CD4-positive, alpha-beta T cell (primary cell): ENCODE measurements at regions of chr6 and their contacts with region 1.

Region 1: GRCh38 chr6:83067448-83068413 is at the start of gene DOP1A:
- DNase-seq: peak; percentile 93 to 98 (median 96)
- ATAC-seq: peak; percentile 89
- H3K4me3 ChIP-seq: peak within 1 kb of the TSS; percentile 82
- H3K4me3 Mint-ChIP-seq: peak within 1 kb of the TSS; percentile 91
- H3K27ac ChIP-seq: peak within 1 kb of the TSS; percentile 85 to 89
- H3K27ac Mint-ChIP-seq: peak within 1 kb of the TSS; percentile 90
- H3K4me1 ChIP-seq: peaks cover 19% of the 10 kb centered on the region
- H3K4me1 Mint-ChIP-seq: peaks cover 67% of the 10 kb centered on the region
- H3K27me3 ChIP-seq: no peaks in the 10 kb centered on the region
- H3K27me3 Mint-ChIP-seq: no peaks in the 10 kb centered on the region
- CTCF ChIP-seq: peak; percentile 95
- total RNA-seq, gene DOP1A: 15.6 to 15.8 TPM

Region 2: DNA sequence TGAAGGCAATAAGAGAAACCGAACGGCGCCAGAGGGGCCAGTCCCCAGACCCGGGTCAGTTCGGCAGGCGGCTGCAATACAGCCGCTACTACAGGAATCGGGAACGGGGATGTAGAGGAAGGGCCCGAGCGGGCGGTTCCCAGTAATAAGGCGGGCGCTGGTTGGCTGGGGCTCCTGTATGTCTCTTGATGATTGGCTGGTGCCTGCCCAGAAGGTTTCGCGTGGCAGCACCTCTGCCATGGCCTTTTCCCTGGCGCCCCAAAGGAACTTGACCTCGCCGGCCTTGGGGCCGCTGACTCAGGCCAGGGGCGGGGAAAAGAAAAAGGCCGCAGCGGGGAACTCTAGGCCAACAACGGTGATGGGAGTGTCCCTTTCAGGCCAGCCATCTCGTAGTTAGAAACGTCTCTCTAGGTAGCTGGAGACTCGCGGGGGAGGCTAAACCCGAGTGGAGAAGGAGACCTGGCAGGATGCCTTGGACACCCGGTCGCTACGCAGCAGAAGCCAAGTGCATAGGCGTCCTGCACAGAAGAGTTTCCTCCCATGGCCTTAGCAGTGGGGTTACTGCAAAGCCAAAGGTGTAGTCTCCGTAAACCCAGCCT is 820.0 kb before region 1 on chr6 and contains the start of gene IBTK:
- CTCF ChIA-PET with region 1: interaction called, 9 read pairs
- POLR2A ChIA-PET with region 1: interaction called, 6 read pairs
- intact Hi-C with region 1: loop called (anchors 2 to 5 kb)
- DNase-seq: peak; percentile 84 to 97 (median 90)
- ATAC-seq: peak; percentile 87
- H3K4me3 ChIP-seq: peak within 1 kb of the TSS; percentile 67
- H3K4me3 Mint-ChIP-seq: peak within 1 kb of the TSS; percentile 96
- H3K27ac ChIP-seq: peak within 1 kb of the TSS; percentile 59 to 73
- H3K27ac Mint-ChIP-seq: peak within 1 kb of the TSS; percentile 98
- H3K4me1 ChIP-seq: peaks cover 24% of the 10 kb centered on the region
- H3K4me1 Mint-ChIP-seq: peaks cover 51% of the 10 kb centered on the region
- H3K27me3 ChIP-seq: no peaks in the 10 kb centered on the region
- H3K27me3 Mint-ChIP-seq: no peaks in the 10 kb centered on the region
- CTCF ChIP-seq: no peak
- total RNA-seq, gene IBTK: 11.0 to 11.2 TPM

Region 3: DNA sequence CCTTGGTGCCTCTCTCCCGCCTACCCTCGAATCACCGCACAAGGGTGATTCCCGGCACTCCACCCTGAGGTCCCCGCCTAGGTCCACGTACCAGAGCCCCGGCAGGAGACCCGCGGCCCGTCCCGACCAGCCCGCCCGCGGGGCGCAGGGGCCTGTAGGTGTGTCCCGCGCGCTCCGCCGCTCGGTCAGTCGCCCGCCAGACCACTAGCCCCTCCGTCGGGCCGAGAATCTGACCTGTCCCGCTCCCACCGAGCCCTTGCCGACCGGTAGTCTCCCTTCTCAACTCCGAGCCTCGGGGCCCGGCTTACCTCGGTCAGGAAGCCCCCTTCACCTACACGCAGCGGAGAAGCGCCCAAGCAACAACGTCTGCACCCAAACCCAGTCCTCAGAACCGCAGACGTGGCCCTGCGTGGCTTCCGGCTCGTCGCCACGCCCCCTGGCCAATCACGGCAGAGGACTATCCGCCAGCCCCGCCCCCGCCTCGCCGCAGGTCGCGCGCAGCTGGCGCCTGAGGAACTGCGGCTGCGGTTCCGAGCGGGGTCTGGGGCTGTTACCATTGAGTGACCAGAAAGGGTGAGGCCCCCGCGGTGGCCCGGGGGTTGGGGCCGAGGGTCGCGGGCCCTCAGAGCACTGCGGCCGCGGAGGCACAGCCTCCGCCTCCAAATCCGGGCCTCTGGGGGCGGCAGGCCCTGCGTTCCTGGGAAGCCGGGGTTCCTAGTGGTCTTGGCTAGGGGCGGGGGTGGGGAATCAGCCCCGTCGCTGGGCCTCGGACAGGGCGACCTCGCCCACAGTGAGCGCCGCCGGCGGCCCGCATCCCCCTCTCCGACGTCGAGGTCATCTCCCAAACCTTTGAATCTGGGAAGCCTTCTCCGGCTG is 125.4 kb after region 1 on chr6 and contains the starts of genes PGM3 and RWDD2A:
- CTCF ChIA-PET with region 1: interaction called, 10 read pairs
- POLR2A ChIA-PET with region 1: interaction called, 6 read pairs
- intact Hi-C with region 1: loop called (anchors 2 kb)
- DNase-seq: peak; percentile 81 to 96 (median 89)
- ATAC-seq: peak; percentile 97
- H3K4me3 ChIP-seq: peak within 1 kb of the TSS; percentile 88
- H3K4me3 Mint-ChIP-seq: peak within 1 kb of the TSS; percentile 97
- H3K27ac ChIP-seq: peak within 1 kb of the TSS in 1 of 2 donors; percentile 70
- H3K27ac Mint-ChIP-seq: peak within 1 kb of the TSS; percentile 94
- H3K4me1 ChIP-seq: peaks cover 17% of the 10 kb centered on the region
- H3K4me1 Mint-ChIP-seq: peaks cover 54% of the 10 kb centered on the region
- H3K27me3 ChIP-seq: no peaks in the 10 kb centered on the region
- H3K27me3 Mint-ChIP-seq: no peaks in the 10 kb centered on the region
- CTCF ChIP-seq: no peak
- total RNA-seq, gene PGM3: 22.6 to 25.3 TPM
- total RNA-seq, gene RWDD2A: 2.8 to 3.0 TPM

Region 4: GRCh38 chr6:83215131-83216047 is 147.7 kb after region 1 on chr6:
- CTCF ChIA-PET with region 1: interaction called, 13 read pairs
- POLR2A ChIA-PET with region 1: interaction called, 9 read pairs
- intact Hi-C with region 1: loop called in 1 of 2 experiments (anchors 1 kb)
- DNase-seq: peak in 13 of 14 experiments; percentile 23 to 78 (median 42)
- ATAC-seq: peak; percentile 98
- H3K4me3 ChIP-seq: no peak overlapping the region
- H3K4me3 Mint-ChIP-seq: no peak overlapping the region
- H3K27ac ChIP-seq: no peak overlapping the region
- H3K27ac Mint-ChIP-seq: no peak overlapping the region
- H3K4me1 ChIP-seq: no peaks in the 10 kb centered on the region
- H3K4me1 Mint-ChIP-seq: no peaks in the 10 kb centered on the region
- H3K27me3 ChIP-seq: peaks cover 0 to 4% of the 10 kb centered on the region in 2 experiments
- H3K27me3 Mint-ChIP-seq: peaks cover 11% of the 10 kb centered on the region
- CTCF ChIP-seq: peak; percentile 83

Region 5: GRCh38 chr6:83514866-83515466 is 447.2 kb after region 1 on chr6:
- CTCF ChIA-PET with region 1: no interaction called
- POLR2A ChIA-PET with region 1: no interaction called
- intact Hi-C with region 1: loop called in 1 of 2 experiments (anchors 10 kb)
- DNase-seq: peak in 3 of 14 experiments; percentile 41 to 58 (median 54)
- ATAC-seq: no peak
- H3K4me3 ChIP-seq: no peak overlapping the region
- H3K4me3 Mint-ChIP-seq: no peak overlapping the region
- H3K27ac ChIP-seq: no peak overlapping the region
- H3K27ac Mint-ChIP-seq: no peak overlapping the region
- H3K4me1 ChIP-seq: peaks cover 4% of the 10 kb centered on the region
- H3K4me1 Mint-ChIP-seq: peaks cover 6% of the 10 kb centered on the region
- H3K27me3 ChIP-seq: peaks cover 10 to 26% of the 10 kb centered on the region in 2 experiments
- H3K27me3 Mint-ChIP-seq: peaks cover 64% of the 10 kb centered on the region
- CTCF ChIP-seq: peak; percentile 66